CD4-positive, alpha-beta memory T cell (primary cell): ENCODE measurements at regions of chr22 and their contacts with region 1.

Region 1: GRCh38 chr22:30444632-30445437 is 19.3 kb downstream of the MTFP1 start:
- DNase-seq: peak in 3 of 5 donors; percentile 36 to 56 (median 50)
- H3K4me3 ChIP-seq: no peak overlapping the region
- H3K4me3 Mint-ChIP-seq: no peak overlapping the region
- H3K27ac ChIP-seq: no peak overlapping the region
- H3K27ac Mint-ChIP-seq: peak overlapping the region in 2 of 7 donors; percentile 35 to 88
- H3K4me1 ChIP-seq: peaks cover 18% of the 10 kb centered on the region
- H3K4me1 Mint-ChIP-seq: peaks cover 8 to 21% (median 16%) of the 10 kb centered on the region in 4 donors
- H3K27me3 ChIP-seq: peaks cover 6% of the 10 kb centered on the region
- H3K27me3 Mint-ChIP-seq: peaks cover 29 to 43% of the 10 kb centered on the region in 2 donors

Region 2: DNA sequence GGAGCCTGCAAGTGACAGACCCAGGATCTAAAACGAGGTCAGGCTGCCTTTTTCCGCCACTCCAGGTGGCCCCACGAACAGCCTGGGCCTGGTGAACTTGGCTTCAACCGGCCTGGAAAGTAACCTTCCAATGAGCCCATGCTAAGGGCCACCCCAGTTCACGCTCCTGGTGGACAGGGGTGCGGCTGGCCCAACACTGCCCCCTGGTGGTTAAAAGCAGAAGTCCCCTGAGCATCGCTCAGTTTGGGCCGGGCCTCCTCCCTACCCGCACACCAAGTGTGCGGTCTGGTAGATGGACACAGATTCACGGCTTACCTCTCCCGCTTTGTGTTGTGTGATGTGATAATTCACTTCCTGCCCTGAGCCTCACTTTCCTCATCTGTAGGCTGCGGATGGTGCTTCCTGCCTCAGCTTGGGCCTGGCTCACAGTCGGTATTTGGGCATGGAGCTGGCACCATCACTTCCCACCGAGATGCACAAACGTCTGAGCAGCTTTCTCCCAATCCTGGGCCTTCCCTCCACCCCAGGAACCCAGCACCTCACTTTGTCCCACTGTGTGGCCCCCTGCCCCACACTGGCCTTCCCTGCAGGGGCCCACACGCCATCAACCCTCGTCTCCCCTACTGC is 40.6 kb after region 1 on chr22:
- CTCF ChIA-PET with region 1: interaction called, 7 read pairs
- POLR2A ChIA-PET with region 1: no interaction called
- intact Hi-C with region 1: loop called (anchors 1 kb)
- DNase-seq: peak; percentile 70 to 77 (median 71)
- H3K4me3 ChIP-seq: no peak overlapping the region
- H3K4me3 Mint-ChIP-seq: no peak overlapping the region
- H3K27ac ChIP-seq: no peak overlapping the region
- H3K27ac Mint-ChIP-seq: peak overlapping the region in 2 of 7 donors; percentile 47 to 73
- H3K4me1 ChIP-seq: no peaks in the 10 kb centered on the region
- H3K4me1 Mint-ChIP-seq: peaks cover 0 to 3% (median 0%) of the 10 kb centered on the region in 4 donors
- H3K27me3 ChIP-seq: no peaks in the 10 kb centered on the region
- H3K27me3 Mint-ChIP-seq: peaks cover 1 to 4% of the 10 kb centered on the region in 2 donors